T-cell (primary cell): ENCODE measurements at regions of chr1 and their contacts with region 1.

Region 1: GRCh38 chr1:211680752-211681327 is 5.4 kb upstream of the NEK2 start:
- DNase-seq: peak; percentile 30 to 91 (median 70)
- ATAC-seq: peak; percentile 91 to 96 (median 92)
- H3K4me3 ChIP-seq: no peak overlapping the region
- H3K4me3 Mint-ChIP-seq: peak overlapping the region in 2 of 3 donors; percentile 14 to 40
- H3K27ac ChIP-seq: peak overlapping the region; percentile 89
- H3K27ac Mint-ChIP-seq: peak overlapping the region; percentile 84 to 94
- H3K4me1 ChIP-seq: peaks cover 9 to 22% of the 10 kb centered on the region in 2 experiments
- H3K4me1 Mint-ChIP-seq: peaks cover 14 to 24% (median 20%) of the 10 kb centered on the region in 3 donors
- H3K27me3 ChIP-seq: no peaks in the 10 kb centered on the region
- H3K27me3 Mint-ChIP-seq: no peaks in the 10 kb centered on the region

Region 2: DNA sequence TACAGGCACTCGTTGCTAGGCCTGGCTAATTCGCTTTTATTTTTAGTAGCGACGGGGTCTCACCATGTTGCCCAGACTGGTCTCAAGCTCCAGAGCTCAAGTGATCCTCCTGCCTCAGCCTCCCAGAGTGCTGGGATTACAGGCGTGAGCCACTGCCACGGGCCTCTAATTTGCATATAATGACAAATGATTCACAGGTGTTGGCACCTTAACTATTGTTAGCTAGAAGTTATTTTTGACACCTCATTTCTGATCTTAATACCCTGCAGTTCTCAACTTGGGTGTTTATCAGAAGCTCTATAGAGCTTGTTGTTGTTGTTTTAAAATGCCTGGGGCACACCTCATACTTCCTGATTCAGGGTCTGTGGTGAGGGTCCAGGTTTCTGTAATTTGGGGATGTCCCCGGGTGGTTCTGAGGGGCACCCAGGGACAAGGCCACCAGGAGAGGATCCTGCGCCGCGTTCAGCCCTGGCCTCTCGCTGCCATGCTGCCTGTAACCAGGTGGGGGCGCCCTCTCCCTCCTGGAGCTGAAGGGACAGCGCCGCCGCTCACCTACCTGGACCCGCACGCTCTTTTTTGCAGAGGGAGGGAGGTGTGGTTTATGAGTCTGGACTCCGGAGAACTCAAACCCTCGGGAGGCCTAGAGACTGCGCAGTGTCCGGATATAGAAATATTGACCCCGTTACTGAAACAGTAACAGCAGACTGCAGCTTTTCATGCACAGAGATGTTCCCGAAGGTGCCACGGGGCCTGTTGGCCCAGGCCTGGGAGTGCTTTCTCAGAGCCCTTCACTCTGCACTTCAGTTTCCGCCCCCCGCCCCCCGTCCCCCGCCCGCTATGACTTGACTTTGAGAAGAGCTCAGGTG is 17.6 kb after region 1 on chr1:
- CTCF ChIA-PET with region 1: interaction called, 12 to 52 read pairs
- POLR2A ChIA-PET with region 1: no interaction called
- DNase-seq: peak; percentile 44 to 84 (median 75)
- ATAC-seq: peak; percentile 88 to 94 (median 90)
- H3K4me3 ChIP-seq: peak overlapping the region in 1 of 2 donors; percentile 53
- H3K4me3 Mint-ChIP-seq: peak overlapping the region; percentile 56 to 65 (median 58)
- H3K27ac ChIP-seq: no peak overlapping the region
- H3K27ac Mint-ChIP-seq: no peak overlapping the region
- H3K4me1 ChIP-seq: peaks cover 5 to 45% of the 10 kb centered on the region in 2 experiments
- H3K4me1 Mint-ChIP-seq: peaks cover 19 to 50% (median 20%) of the 10 kb centered on the region in 3 donors
- H3K27me3 ChIP-seq: peaks cover 0 to 10% of the 10 kb centered on the region in 2 experiments
- H3K27me3 Mint-ChIP-seq: no peaks in the 10 kb centered on the region

Region 3: DNA sequence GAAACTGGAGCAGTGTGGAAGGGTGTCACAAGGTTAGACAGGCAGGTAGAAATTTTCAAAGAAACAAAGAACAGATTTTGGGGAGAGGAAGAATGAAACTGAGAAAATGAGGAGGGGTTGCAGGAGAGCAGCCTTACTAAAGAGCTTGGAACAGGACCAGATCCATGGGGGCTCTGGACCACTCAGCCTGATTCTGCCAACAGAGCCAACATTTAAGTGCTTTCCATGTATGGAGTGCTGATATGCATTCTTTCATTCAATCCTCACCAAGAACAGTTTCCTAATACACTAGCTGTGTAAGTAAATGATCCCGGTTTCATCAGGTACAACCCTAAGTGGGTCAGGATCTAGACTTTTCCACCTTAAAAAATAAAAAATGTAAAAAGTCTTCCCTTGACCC is 133.5 kb after region 1 on chr1:
- CTCF ChIA-PET with region 1: interaction called in 1 of 2 experiments, 10 read pairs
- POLR2A ChIA-PET with region 1: no interaction called
- DNase-seq: no peak
- ATAC-seq: no peak
- H3K4me3 ChIP-seq: no peak overlapping the region
- H3K4me3 Mint-ChIP-seq: no peak overlapping the region
- H3K27ac ChIP-seq: no peak overlapping the region
- H3K27ac Mint-ChIP-seq: no peak overlapping the region
- H3K4me1 ChIP-seq: no peaks in the 10 kb centered on the region
- H3K4me1 Mint-ChIP-seq: peaks cover 6 to 14% (median 8%) of the 10 kb centered on the region in 3 donors
- H3K27me3 ChIP-seq: no peaks in the 10 kb centered on the region
- H3K27me3 Mint-ChIP-seq: no peaks in the 10 kb centered on the region

Region 4: DNA sequence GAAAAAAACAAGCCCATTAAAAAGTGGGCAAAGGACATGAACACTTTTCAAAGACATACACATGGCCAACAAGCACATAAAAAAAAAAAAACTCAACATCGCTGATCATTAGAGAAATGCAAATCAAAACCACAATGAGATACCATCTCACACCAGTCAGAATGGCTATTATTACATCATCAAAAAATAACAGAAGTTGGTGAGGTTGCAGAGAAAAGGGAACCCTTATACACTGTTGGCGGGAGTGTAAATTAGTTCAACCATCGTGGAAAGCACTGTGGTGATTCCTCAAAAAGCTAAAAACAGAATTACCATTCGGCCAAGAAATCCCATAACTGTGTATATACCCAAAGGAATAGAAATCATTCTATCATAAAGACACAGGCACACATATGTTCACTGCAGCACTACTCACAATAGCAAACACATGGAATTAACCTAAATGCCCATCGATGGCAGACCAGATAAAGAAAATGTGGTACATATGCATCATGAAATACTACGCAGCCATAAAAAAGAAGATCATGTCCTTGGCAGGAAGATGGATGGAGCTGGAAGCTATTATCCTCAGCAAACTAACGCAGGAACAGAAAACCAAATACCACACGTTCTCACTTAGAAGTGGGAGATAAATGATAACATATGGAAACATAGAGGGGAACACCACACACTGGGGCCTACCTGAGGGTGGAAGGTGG is 284.4 kb after region 1 on chr1:
- CTCF ChIA-PET with region 1: no interaction called
- POLR2A ChIA-PET with region 1: no interaction called
- DNase-seq: no peak
- ATAC-seq: no peak
- H3K4me3 ChIP-seq: no peak overlapping the region
- H3K4me3 Mint-ChIP-seq: no peak overlapping the region
- H3K27ac ChIP-seq: no peak overlapping the region
- H3K27ac Mint-ChIP-seq: no peak overlapping the region
- H3K4me1 ChIP-seq: no peaks in the 10 kb centered on the region
- H3K4me1 Mint-ChIP-seq: no peaks in the 10 kb centered on the region
- H3K27me3 ChIP-seq: no peaks in the 10 kb centered on the region
- H3K27me3 Mint-ChIP-seq: no peaks in the 10 kb centered on the region

Region 5: DNA sequence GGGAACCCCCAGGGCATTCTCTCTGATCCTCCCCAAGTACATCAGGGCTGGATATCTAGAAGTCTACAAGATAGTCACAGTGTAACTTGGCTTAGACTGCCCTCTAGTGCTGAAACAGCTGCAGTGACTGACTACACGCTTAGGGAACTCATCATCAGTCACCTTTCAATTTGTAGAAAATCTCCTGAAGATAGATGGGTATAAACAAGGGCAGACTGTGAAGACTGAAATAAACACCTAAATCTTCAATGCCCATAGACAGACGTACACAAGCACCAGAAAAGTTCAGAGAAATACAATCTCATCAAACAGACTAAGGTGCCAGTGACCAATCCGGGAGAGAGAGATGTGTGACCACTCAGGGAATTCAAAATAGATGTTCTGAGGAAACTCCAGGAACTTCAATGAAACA is 687.2 kb after region 1 on chr1:
- CTCF ChIA-PET with region 1: interaction called in 1 of 2 experiments, 24 read pairs
- POLR2A ChIA-PET with region 1: no interaction called
- DNase-seq: peak in 33 of 35 experiments; percentile 19 to 78 (median 38)
- ATAC-seq: peak; percentile 65 to 80 (median 77)
- H3K4me3 ChIP-seq: no peak overlapping the region
- H3K4me3 Mint-ChIP-seq: no peak overlapping the region
- H3K27ac ChIP-seq: no peak overlapping the region
- H3K27ac Mint-ChIP-seq: no peak overlapping the region
- H3K4me1 ChIP-seq: peaks cover 0 to 3% of the 10 kb centered on the region in 2 experiments
- H3K4me1 Mint-ChIP-seq: peaks cover 0 to 5% (median 2%) of the 10 kb centered on the region in 3 donors
- H3K27me3 ChIP-seq: no peaks in the 10 kb centered on the region
- H3K27me3 Mint-ChIP-seq: no peaks in the 10 kb centered on the region